Thyroid gland (tissue), 4 donors: ENCODE measurements at regions of chr15 and their contacts with region 1.

Region 1: DNA sequence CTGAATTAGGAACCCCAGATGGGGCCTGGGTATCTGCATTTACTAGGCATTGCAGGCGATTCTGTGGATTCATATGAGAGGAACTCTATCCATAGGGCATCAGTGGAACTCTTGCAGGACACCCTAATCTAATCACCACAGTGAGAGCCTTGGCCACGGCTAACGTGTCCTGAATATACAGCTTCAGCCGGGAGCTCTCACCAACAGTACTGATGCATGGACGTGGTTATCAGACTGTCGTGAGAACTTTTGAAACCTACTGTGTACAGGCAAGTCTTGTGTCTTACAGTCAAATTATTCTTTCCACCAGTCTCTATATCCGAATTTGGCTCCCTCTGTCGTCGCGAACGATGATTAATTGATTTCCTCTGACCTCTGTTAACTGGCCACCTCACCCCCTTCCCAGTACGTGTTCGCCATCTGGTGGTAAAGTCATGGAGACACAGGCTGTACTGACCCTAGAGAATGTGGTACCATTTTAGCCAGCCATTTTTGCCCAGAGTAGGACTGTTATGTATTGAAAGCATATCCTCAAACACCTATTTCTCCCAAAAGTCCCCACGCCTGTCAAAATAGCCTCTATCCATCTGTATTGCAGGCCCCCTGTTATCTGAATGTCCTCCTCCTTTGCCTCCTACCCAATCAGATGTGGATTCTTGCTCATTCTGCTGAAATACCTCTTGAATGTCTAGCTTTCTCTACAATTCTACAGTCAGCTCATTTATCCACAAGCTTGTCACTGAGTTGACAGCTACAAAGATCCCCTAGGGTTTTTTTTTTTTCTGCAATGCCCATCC is 39.7 kb downstream of the GLDN start:
- DNase-seq: peak; percentile 51 to 53
- H3K4me3 ChIP-seq: no peak overlapping the region
- H3K27ac ChIP-seq: no peak overlapping the region
- H3K4me1 ChIP-seq: peaks cover 6 to 11% of the 10 kb centered on the region in 2 donors
- H3K27me3 ChIP-seq: no peaks in the 10 kb centered on the region
- CTCF ChIP-seq: peak; percentile 48 to 95 (median 84)
- POLR2A ChIP-seq: no peak

Region 2: DNA sequence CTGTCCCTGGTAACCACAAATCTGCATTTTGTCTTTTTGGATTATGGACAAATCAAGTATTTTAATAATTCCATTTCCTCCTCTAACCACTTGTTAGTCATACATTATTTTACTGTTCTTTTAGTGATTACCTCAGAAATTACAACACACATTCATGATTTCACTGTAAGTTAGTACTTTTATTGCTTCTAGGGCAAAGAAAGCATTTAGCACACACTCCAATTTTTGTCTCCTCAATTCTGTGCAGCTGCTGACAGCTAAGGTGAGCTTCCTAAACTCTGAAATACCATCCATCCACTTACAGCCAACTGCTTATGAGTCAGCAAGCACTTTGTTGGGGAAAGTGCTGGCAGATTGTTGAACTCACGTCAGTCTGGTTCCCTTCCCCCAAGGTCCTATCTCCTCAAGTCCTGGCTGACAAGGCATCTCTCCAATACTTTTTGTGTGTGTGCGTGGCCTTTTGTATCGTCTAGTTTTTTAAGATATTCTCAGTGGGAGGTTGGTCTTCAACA is 237.1 kb before region 1 on chr15:
- intact Hi-C with region 1: loop called (anchors 5 kb)
- DNase-seq: no peak
- H3K4me3 ChIP-seq: no peak overlapping the region
- H3K27ac ChIP-seq: no peak overlapping the region
- H3K4me1 ChIP-seq: no peaks in the 10 kb centered on the region
- H3K27me3 ChIP-seq: no peaks in the 10 kb centered on the region
- CTCF ChIP-seq: no peak
- POLR2A ChIP-seq: no peak

Region 3: DNA sequence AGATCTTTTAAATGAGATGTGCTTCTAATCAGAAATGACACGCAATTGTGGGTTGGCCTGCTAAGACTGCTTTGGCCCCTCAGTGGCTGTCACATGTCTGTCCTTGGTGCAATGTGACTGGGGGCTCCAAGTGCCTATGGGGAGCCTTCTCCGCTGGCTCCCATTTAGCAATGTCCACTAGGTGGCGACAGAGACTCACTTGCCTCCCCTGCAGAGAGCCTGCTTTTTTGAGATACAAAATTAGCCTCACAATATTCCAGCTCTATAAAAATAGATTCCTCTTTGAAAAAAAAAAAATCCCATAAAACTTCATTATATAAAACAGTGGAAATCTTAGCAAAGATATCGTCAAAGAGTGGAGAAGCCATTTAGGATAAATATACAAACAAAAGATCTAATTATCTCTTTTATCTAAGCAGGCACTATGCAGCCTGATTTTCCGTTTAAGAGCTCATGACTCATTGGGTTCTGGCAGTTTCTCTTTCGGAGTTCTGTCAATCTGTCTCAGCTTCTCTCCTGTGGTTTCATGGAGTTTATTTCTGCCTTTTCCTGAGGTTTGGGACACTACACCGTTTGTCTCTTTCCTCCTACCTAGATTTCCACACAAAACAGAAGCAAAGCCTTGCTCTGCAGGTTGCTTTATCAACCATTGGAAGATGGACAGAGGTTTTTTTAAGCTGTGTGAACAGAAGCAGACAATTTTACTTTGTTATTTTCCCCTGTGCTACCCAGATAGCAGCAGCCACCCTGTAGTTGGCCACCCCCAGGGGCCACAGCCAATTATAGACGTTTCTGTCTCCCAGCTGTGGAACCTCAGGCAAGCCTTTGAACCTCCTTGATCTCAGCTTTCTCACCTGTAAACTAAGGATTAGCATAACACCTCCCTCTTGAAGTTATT is 218.1 kb before region 1 on chr15:
- intact Hi-C with region 1: loop called (anchors 5 kb)
- DNase-seq: peak; percentile 59 to 61
- H3K4me3 ChIP-seq: no peak overlapping the region
- H3K27ac ChIP-seq: peak overlapping the region in 1 of 3 donors; percentile 33
- H3K4me1 ChIP-seq: peaks cover 0 to 4% of the 10 kb centered on the region in 2 donors
- H3K27me3 ChIP-seq: no peaks in the 10 kb centered on the region
- CTCF ChIP-seq: peak; percentile 63 to 96 (median 82)
- POLR2A ChIP-seq: no peak

Region 4: DNA sequence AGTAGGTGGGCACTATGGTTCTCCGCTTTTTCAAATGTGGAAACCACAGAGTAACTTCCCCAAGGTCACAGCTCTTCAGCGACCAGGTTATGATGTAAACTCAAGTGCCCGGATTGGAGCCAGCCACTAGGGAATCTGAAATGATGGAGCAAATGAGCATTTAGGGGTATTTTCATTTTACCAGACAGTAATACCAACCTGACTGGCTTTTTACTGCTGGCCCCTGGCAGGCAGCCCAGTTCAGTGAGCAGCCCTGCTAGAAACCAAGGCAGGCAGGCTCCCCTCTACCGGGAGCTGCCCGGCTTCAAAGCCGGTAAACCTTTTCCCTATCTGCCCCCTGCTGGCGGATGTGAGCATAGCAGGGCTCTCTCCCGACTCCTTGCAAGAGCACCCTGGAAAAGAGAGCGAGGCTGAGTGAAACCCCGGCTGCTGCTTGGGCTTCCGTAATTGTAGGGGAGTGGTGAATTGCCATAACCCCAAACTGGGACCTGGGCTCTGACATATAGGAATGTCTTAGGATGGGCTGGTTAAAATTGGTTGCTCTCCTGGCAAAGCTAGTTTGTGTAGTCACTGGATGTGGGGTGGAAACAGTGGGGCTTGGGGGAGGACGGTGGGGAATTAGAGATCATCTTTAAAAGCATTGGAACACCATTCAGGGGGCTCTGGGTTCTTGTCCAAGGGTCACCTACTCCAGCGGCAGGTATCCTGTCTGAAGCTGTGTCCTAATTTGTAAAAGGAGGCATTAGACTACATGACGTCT is 188.5 kb before region 1 on chr15:
- intact Hi-C with region 1: no loop called
- DNase-seq: peak; percentile 87 to 91
- H3K4me3 ChIP-seq: no peak overlapping the region
- H3K27ac ChIP-seq: no peak overlapping the region
- H3K4me1 ChIP-seq: peaks cover 0 to 5% of the 10 kb centered on the region in 2 donors
- H3K27me3 ChIP-seq: no peaks in the 10 kb centered on the region
- CTCF ChIP-seq: peak; percentile 71 to 96 (median 85)
- POLR2A ChIP-seq: no peak

Region 5: DNA sequence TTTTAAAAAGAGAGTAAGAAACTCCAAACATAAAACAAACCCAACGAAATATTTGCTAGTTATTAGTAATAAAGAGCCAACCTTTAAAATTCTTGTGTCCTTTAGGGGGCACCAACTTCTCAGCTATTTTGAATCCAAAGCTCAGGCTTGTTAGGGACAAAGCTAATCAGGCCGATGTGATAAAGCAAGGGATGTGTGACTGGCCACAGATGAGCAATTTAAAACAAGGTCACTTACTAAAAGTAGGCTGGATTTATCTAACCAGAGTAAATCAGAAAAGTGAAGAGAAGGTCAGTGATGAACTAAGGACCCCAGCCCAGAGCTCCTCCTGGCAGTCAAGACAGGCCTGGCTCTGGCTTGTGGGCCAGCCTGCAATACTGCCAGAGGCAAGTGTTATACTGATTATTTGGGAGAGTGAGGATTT is 151.3 kb before region 1 on chr15:
- intact Hi-C with region 1: loop called (anchors 10 kb)
- DNase-seq: no peak
- H3K4me3 ChIP-seq: no peak overlapping the region
- H3K27ac ChIP-seq: no peak overlapping the region
- H3K4me1 ChIP-seq: no peaks in the 10 kb centered on the region
- H3K27me3 ChIP-seq: no peaks in the 10 kb centered on the region
- CTCF ChIP-seq: peak in 2 of 6 experiments; percentile 10 to 17
- POLR2A ChIP-seq: no peak

Region 6: DNA sequence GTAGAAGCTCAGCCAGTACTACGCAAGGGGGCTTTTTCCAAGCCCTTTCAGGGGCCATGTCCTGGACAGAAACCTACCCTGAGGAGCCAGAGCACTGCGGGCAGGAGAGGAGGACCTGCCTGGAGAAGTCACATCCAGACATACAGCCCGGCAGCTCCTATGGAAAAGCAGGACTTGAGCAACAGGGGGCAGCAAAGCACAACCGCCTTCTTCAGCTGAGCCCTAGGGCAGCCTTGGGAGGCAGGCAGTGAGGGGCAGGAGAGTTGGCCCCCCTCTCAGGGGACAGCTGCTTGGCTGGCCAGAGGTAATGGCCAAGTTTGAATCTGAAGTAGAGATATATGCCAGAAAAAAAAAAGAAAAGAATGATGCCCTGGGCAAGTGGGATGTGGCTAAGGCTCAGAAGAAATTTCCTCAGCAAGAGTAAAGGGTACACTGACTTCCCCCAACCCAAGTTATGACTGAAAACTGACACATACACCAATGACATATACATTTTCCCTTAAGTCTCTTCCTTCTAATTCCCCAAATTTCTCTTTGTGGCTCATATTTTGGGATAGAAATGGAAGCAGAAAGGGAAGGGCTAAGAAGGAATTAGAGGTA is 99.7 kb before region 1 on chr15:
- intact Hi-C with region 1: loop called (anchors 5 kb)
- DNase-seq: peak; percentile 59 to 64
- H3K4me3 ChIP-seq: no peak overlapping the region
- H3K27ac ChIP-seq: no peak overlapping the region
- H3K4me1 ChIP-seq: no peaks in the 10 kb centered on the region
- H3K27me3 ChIP-seq: no peaks in the 10 kb centered on the region
- CTCF ChIP-seq: peak in 5 of 6 experiments; percentile 21 to 71 (median 60)
- POLR2A ChIP-seq: no peak